ENCODE measurements at regions of chr1 and their contacts with region 1.

Region 1: DNA sequence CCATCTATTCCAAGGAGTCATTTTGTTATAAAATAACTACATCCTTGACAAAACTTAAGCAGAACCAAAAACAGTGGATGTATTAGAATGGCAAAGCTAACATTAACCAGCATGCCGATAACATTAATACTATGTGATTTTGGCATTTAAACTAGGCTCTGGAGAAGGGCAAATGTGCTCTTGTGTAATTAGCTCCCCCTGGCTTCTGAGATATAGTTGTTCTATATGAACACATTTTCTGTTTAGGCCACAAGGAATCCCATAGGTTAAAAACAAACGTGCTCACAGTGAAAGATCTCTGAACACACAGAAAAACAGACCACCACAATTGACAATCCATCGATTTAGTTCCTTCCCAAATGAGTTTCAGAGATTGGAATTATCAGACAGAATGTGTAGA is 57.4 kb upstream of the TARS2 start:
- DNase-seq: no peak
- ATAC-seq: no peak
- H3K4me3 ChIP-seq: no peak overlapping the region
- H3K27ac ChIP-seq: no peak overlapping the region
- H3K4me1 ChIP-seq: no peaks in the 10 kb centered on the region
- H3K27me3 ChIP-seq: no peaks in the 10 kb centered on the region
- CTCF ChIP-seq: peak; percentile 3

Region 2: GRCh38 chr1:150372580-150372979 is 57.2 kb before region 1 on chr1:
- intact Hi-C with region 1: loop called in 1 of 2 experiments (anchors 10 kb)
- DNase-seq: no peak
- ATAC-seq: no peak
- H3K4me3 ChIP-seq: no peak overlapping the region
- H3K27ac ChIP-seq: no peak overlapping the region
- H3K4me1 ChIP-seq: peaks cover 46% of the 10 kb centered on the region
- H3K27me3 ChIP-seq: no peaks in the 10 kb centered on the region
- CTCF ChIP-seq: no peak